Left ventricle myocardium superior (tissue), 1 donor: ENCODE measurements at regions of chr1 and their contacts with region 1.

Region 1: GRCh38 chr1:180851995-180852887 is 60.5 kb upstream of the KIAA1614 start:
- DNase-seq: no peak
- ATAC-seq: no peak

Region 2: GRCh38 chr1:180631766-180632325 is 220.4 kb before region 1 on chr1 and contains the start of gene XPR1:
- intact Hi-C with region 1: loop called (anchors 10 kb)
- DNase-seq: peak; percentile 97
- ATAC-seq: peak; percentile 97
- total RNA-seq, gene XPR1: 43.8 TPM

Region 3: DNA sequence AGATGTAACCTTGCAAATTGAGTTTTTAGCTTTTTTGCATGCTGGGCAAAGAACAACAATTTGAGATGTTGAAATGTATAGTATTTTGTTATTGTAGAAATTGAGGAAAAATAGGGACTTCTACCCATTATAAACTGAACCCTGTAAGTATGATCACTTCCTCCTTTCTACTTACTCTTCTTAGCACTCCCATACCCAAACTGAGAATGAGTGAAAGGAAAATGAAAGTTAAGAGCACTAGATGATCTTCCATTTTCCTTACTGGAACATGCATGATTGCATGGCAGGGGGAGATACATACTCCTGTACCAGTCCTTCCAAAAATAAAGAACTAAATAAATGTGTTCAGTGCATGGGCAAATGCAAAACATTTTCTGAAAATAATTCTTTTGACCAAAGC is 46.9 kb before region 1 on chr1:
- intact Hi-C with region 1: no loop called
- DNase-seq: no peak
- ATAC-seq: no peak

Region 4: GRCh38 chr1:180994262-180994661 is 142.0 kb after region 1 on chr1:
- intact Hi-C with region 1: no loop called
- DNase-seq: no peak
- ATAC-seq: peak; percentile 73